Gastrocnemius medialis (tissue), 4 donors: ENCODE measurements at regions of chrX and their contacts with region 1.

Region 1: GRCh38 chrX:108020631-108021030 is 24.2 kb upstream of the VSIG1 start:
- DNase-seq: no peak
- ATAC-seq: no peak
- H3K4me3 ChIP-seq: no peak overlapping the region
- H3K27ac ChIP-seq: no peak overlapping the region
- H3K4me1 ChIP-seq: no peaks in the 10 kb centered on the region
- H3K27me3 ChIP-seq: no peaks in the 10 kb centered on the region
- CTCF ChIP-seq: peak in 3 of 5 experiments; percentile 16 to 46 (median 30)
- POLR2A ChIP-seq: no peak

Region 2: GRCh38 chrX:108138814-108139702 is 118.4 kb after region 1 on chrX:
- in situ Hi-C with region 1: no loop called
- intact Hi-C with region 1: loop called (anchors 2 kb)
- DNase-seq: no peak
- ATAC-seq: no peak
- H3K4me3 ChIP-seq: no peak overlapping the region
- H3K27ac ChIP-seq: no peak overlapping the region
- H3K4me1 ChIP-seq: no peaks in the 10 kb centered on the region
- H3K27me3 ChIP-seq: no peaks in the 10 kb centered on the region
- CTCF ChIP-seq: peak in 4 of 5 experiments; percentile 22 to 54 (median 39)
- POLR2A ChIP-seq: no peak

Region 3: DNA sequence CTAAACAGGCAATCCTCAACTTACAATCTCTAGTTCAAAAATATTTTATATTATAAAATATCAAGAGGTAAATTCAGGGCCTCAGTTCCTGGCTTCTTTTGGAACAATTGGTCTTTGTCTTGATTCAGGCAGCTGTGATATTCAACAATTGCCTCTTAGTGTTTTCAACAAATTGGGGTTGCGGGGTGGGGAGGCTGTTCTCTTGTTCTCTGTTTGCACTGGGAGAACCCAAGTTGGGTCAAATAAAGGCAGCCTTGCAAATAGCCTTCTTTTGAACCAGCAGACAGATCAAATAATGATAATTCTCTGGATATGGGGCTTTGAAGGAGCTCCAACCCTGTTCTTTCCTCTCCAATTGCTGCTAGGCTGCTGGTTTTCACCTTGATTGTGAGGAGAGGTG is 561.5 kb after region 1 on chrX:
- in situ Hi-C with region 1: no loop called
- intact Hi-C with region 1: no loop called
- DNase-seq: no peak
- ATAC-seq: no peak
- H3K4me3 ChIP-seq: no peak overlapping the region
- H3K27ac ChIP-seq: no peak overlapping the region
- H3K4me1 ChIP-seq: no peaks in the 10 kb centered on the region
- H3K27me3 ChIP-seq: no peaks in the 10 kb centered on the region
- CTCF ChIP-seq: no peak
- POLR2A ChIP-seq: no peak